Endothelial cell of umbilical vein (primary cell): ENCODE measurements at regions of chr1 and their contacts with region 1.

Region 1: DNA sequence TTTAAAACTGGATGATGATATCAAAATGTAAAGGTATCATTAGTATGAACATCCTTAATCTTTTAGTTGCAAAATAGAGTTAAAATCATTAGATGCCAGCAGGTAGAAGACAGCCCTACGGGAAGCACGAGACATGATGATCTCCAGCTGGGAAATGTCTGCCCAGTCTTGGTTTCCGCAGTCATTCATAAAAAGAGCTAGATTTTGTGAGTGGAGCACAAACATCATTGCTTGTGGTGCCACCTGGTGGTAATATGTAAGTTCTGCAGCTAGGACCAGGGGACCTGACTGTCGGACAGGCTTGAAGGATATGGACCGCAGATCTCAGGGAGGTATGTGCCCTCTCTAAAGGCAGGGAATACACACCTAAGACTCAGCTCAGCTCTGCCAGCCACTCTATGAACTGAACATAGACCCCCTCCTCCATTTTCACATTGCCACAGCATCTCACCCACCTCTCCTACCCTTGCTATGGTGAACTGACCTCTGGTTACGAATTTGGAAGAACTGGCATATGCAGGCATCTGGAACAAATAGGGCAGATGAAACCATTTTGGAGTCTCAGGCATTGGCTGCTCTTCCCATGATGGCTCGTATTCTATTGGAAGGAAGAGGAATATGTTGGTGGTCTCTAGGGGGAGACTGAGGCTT is 9.2 kb downstream of the FCMR start:
- DNase-seq: peak; percentile 75
- H3K4me3 ChIP-seq: no peak overlapping the region
- H3K27ac ChIP-seq: no peak overlapping the region
- H3K4me1 ChIP-seq: no peaks in the 10 kb centered on the region
- H3K27me3 ChIP-seq: peaks cover 35 to 36% of the 10 kb centered on the region in 2 experiments
- CTCF ChIP-seq: peak; percentile 71 to 82
- POLR2A ChIP-seq: no peak

Region 2: DNA sequence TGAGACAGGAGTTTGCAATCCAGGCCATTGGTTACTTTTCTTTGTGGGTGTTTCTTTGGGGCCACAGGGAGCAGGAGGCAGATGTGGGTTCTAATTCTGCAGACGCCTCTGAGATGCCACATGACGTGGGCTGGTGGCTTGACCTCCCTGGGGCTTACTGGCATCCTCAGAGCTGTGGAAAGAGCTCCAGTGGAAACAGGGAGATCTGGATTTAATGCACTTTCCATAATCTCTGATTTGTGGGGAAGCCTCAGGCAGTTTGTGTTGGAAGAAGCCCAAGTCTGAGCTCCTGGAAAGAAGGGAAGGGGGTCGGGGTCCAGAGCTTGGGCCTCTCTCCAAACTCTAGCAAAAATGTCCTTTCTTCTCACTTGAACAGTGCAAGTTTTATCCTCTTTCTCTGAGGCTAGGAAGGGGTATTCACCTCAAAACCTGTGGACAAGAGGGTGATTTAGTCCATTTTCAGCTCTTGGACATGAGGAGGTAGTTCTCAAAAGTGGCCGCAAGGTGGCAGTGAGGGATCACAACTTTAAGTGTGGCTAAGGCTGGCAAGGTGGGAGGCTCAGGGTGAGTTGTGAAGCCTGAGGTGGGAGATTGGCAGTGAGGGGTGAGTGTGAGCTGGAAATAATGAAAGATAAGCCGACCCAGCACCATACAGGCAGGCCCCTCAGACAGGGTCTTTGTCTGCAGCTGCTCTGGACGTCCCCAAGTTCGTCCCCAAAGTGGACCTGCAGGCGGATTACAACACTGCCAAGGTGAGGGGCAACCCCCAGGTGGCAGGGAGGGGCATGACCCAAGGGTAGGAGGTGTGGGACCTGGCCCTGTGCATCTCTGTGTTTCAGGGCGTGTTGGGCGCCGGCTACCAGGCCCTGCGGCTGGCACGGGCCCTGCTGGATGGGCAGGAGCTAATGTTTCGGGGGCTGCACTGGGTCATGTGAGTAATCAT is 433.1 kb before region 1 on chr1:
- CTCF ChIA-PET with region 1: interaction called, 15 read pairs
- POLR2A ChIA-PET with region 1: no interaction called
- dilution Hi-C with region 1: no loop called
- intact Hi-C with region 1: no loop called
- DNase-seq: peak; percentile 74
- H3K4me3 ChIP-seq: no peak overlapping the region
- H3K27ac ChIP-seq: no peak overlapping the region
- H3K4me1 ChIP-seq: no peaks in the 10 kb centered on the region
- H3K27me3 ChIP-seq: no peaks in the 10 kb centered on the region
- CTCF ChIP-seq: peak; percentile 76 to 77
- POLR2A ChIP-seq: no peak

Region 3: GRCh38 chr1:206658264-206658980 is 254.1 kb before region 1 on chr1:
- CTCF ChIA-PET with region 1: interaction called, 15 read pairs
- POLR2A ChIA-PET with region 1: no interaction called
- dilution Hi-C with region 1: no loop called
- intact Hi-C with region 1: no loop called
- DNase-seq: peak; percentile 26
- H3K4me3 ChIP-seq: no peak overlapping the region
- H3K27ac ChIP-seq: no peak overlapping the region
- H3K4me1 ChIP-seq: no peaks in the 10 kb centered on the region
- H3K27me3 ChIP-seq: peaks cover 28 to 30% of the 10 kb centered on the region in 2 experiments
- CTCF ChIP-seq: peak; percentile 89 to 90
- POLR2A ChIP-seq: no peak

Region 4: GRCh38 chr1:206734499-206735142 is 177.9 kb before region 1 on chr1:
- CTCF ChIA-PET with region 1: interaction called, 58 read pairs
- POLR2A ChIA-PET with region 1: no interaction called
- dilution Hi-C with region 1: no loop called
- intact Hi-C with region 1: loop called (anchors 1 kb)
- DNase-seq: peak; percentile 26
- H3K4me3 ChIP-seq: no peak overlapping the region
- H3K27ac ChIP-seq: no peak overlapping the region
- H3K4me1 ChIP-seq: peaks cover 13% of the 10 kb centered on the region
- H3K27me3 ChIP-seq: no peaks in the 10 kb centered on the region
- CTCF ChIP-seq: peak; percentile 59 to 60
- POLR2A ChIP-seq: no peak

Region 5: GRCh38 chr1:206895830-206896242 is 16.7 kb before region 1 on chr1:
- CTCF ChIA-PET with region 1: interaction called, 21 read pairs
- POLR2A ChIA-PET with region 1: no interaction called
- dilution Hi-C with region 1: no loop called
- intact Hi-C with region 1: no loop called
- DNase-seq: no peak
- H3K4me3 ChIP-seq: no peak overlapping the region
- H3K27ac ChIP-seq: no peak overlapping the region
- H3K4me1 ChIP-seq: no peaks in the 10 kb centered on the region
- H3K27me3 ChIP-seq: peaks cover 0 to 5% of the 10 kb centered on the region in 2 experiments
- CTCF ChIP-seq: no peak
- POLR2A ChIP-seq: no peak

Region 6: DNA sequence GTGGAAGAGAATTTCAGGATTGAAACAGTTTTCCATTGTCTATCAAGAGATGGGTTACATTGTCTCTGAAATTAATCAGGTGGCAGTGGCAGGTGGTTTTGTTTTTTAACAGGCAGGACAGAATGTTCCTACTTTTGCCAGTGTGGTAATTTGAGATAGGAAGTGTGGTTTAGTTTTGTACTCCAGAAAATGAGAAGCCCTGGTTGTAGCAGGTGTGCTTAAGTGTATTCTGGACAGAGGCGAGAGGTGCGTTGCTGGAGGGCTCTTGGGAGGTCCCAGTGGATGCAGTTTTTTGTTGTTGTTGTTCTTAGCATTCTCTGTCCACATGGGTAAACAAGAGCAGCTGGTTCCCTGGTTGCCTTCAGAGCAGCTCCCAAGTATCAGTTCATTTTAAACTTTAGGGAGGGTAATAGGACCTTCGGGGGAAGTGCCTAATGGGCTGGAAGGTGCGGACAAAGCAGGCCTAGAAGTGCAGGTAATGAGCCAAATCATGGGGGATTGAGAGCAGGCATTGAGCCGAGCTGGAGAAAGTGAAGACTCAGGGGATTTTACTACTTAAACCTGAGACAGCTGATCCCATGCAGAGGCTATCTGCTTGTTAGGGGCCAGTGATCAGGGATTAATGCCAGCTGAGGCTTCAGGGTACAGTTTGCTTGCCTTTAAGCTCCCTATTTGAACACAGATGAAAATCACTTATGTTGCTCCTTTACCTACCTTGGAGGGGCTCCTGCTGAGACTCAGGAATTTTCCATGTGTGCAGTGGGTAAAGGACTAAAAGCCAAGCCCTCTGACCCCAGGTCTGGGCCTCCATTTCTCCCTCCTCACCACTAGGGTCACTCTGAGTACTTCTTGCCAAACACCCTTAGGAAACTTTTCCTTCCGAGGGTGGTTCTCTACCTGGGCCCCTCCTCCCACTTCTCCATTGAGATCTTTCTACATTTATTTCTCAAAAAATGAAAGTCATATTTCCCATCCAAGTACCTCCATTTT is 146.6 kb after region 1 on chr1:
- CTCF ChIA-PET with region 1: no interaction called
- POLR2A ChIA-PET with region 1: no interaction called
- dilution Hi-C with region 1: no loop called
- intact Hi-C with region 1: no loop called
- DNase-seq: no peak
- H3K4me3 ChIP-seq: no peak overlapping the region
- H3K27ac ChIP-seq: no peak overlapping the region
- H3K4me1 ChIP-seq: no peaks in the 10 kb centered on the region
- H3K27me3 ChIP-seq: peaks cover 0 to 2% of the 10 kb centered on the region in 2 experiments
- CTCF ChIP-seq: no peak
- POLR2A ChIP-seq: no peak

Region 7: GRCh38 chr1:207499573-207499972 is 587.0 kb after region 1 on chr1:
- CTCF ChIA-PET with region 1: interaction called, 13 read pairs
- POLR2A ChIA-PET with region 1: no interaction called
- dilution Hi-C with region 1: no loop called
- intact Hi-C with region 1: loop called (anchors 1 kb)
- DNase-seq: peak; percentile 72
- H3K4me3 ChIP-seq: no peak overlapping the region
- H3K27ac ChIP-seq: no peak overlapping the region
- H3K4me1 ChIP-seq: peaks cover 4% of the 10 kb centered on the region
- H3K27me3 ChIP-seq: peaks cover 47% of the 10 kb centered on the region in 2 experiments
- CTCF ChIP-seq: peak; percentile 61 to 69
- POLR2A ChIP-seq: no peak